ENCODE measurements at regions of chrX and their contacts with region 1.

Region 1: DNA sequence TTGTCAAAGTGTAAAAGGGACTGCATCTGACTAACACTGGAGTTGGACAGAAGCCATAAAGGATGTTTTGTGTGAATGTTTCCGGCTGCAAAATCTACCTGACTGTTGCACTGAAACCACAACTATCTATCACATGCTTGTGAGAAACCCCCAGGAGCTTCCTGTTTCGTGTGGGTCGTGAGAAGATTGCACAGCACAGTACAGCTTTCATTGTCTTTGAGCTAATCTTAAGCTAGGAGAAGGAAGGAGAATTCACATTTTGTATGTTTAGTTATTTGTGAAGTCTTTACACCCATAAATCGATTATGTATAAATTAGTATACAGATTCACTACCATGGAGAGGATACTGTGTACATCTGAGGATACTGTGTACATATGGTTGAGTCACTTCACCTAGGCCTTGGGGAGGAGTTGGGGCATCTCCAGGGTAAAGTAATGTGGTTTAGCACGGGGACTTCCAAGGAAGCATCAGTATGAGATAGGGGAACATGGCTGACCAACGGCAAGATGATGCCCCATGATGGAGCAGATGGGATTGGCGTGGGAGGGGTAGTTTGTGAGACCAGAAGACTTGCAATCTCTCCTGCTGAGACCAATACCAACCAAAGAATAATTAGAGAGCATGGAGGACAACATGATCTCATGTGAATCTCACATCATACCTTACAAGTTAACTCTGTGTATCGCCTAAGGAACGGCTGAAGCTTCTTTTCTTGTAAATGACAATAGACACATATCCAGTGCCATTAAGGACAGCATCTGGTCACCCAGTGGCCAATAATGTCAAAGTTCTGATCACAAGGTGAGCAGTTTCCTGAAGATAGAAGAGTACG is 43.1 kb upstream of the FAM9C start:
- DNase-seq: peak in 8 of 9 donors; percentile 54 to 94 (median 88)
- ATAC-seq: peak; percentile 77
- H3K4me3 ChIP-seq: peak overlapping the region; percentile 70
- H3K4me3 Mint-ChIP-seq: peak overlapping the region; percentile 72 to 89 (median 82)
- H3K27ac ChIP-seq: peak overlapping the region; percentile 88
- H3K27ac Mint-ChIP-seq: peak overlapping the region; percentile 94 to 99 (median 98)
- H3K4me1 ChIP-seq: peaks cover 79 to 81% of the 10 kb centered on the region in 2 donors
- H3K4me1 Mint-ChIP-seq: peaks cover 15 to 99% (median 86%) of the 10 kb centered on the region in 7 donors
- H3K27me3 ChIP-seq: no peaks in the 10 kb centered on the region
- H3K27me3 Mint-ChIP-seq: no peaks in the 10 kb centered on the region

Region 2: GRCh38 chrX:12505127-12505526 is 582.4 kb before region 1 on chrX:
- CTCF ChIA-PET with region 1: no interaction called
- POLR2A ChIA-PET with region 1: no interaction called
- intact Hi-C with region 1: no loop called
- DNase-seq: no peak
- ATAC-seq: no peak
- H3K4me3 ChIP-seq: no peak overlapping the region
- H3K4me3 Mint-ChIP-seq: no peak overlapping the region
- H3K27ac ChIP-seq: no peak overlapping the region
- H3K27ac Mint-ChIP-seq: no peak overlapping the region
- H3K4me1 ChIP-seq: no peaks in the 10 kb centered on the region
- H3K4me1 Mint-ChIP-seq: no peaks in the 10 kb centered on the region
- H3K27me3 ChIP-seq: no peaks in the 10 kb centered on the region
- H3K27me3 Mint-ChIP-seq: no peaks in the 10 kb centered on the region

Region 3: DNA sequence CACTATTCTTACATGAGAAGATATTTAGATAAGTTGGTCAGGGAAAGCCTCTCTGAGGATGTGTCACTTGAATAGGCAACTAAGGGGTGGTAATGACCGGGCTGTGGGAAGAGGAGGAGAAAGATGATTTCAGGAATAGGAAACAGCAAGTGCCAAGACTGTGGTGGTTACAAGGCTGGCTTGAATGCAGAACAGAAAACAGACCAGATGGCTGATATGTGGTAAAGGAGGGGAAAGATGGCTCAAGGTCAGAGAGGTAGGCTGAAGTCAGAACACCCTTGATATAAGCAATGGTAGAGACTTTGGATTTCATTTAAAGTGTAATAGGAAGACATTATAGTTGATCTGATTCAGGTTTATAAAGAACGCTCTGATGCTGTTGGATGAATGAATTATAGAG is 205.6 kb before region 1 on chrX:
- CTCF ChIA-PET with region 1: no interaction called
- POLR2A ChIA-PET with region 1: no interaction called
- intact Hi-C with region 1: no loop called
- DNase-seq: no peak
- ATAC-seq: no peak
- H3K4me3 ChIP-seq: no peak overlapping the region
- H3K4me3 Mint-ChIP-seq: no peak overlapping the region
- H3K27ac ChIP-seq: no peak overlapping the region
- H3K27ac Mint-ChIP-seq: no peak overlapping the region
- H3K4me1 ChIP-seq: no peaks in the 10 kb centered on the region
- H3K4me1 Mint-ChIP-seq: peaks cover 0 to 4% (median 0%) of the 10 kb centered on the region in 7 donors
- H3K27me3 ChIP-seq: no peaks in the 10 kb centered on the region
- H3K27me3 Mint-ChIP-seq: peaks cover 0 to 8% (median 4%) of the 10 kb centered on the region in 5 donors

Region 4: GRCh38 chrX:12946838-12947544 is 140.5 kb before region 1 on chrX:
- CTCF ChIA-PET with region 1: interaction called, 101 read pairs
- POLR2A ChIA-PET with region 1: interaction called, 449 read pairs
- intact Hi-C with region 1: loop called (anchors 1 kb)
- DNase-seq: peak in 8 of 9 donors; percentile 67 to 89 (median 74)
- ATAC-seq: peak; percentile 64
- H3K4me3 ChIP-seq: peak overlapping the region; percentile 30
- H3K4me3 Mint-ChIP-seq: peak overlapping the region; percentile 16 to 84 (median 72)
- H3K27ac ChIP-seq: peak overlapping the region; percentile 80
- H3K27ac Mint-ChIP-seq: peak overlapping the region; percentile 91 to 98 (median 96)
- H3K4me1 ChIP-seq: peaks cover 39 to 41% of the 10 kb centered on the region in 2 donors
- H3K4me1 Mint-ChIP-seq: peaks cover 8 to 60% (median 53%) of the 10 kb centered on the region in 7 donors
- H3K27me3 ChIP-seq: no peaks in the 10 kb centered on the region
- H3K27me3 Mint-ChIP-seq: no peaks in the 10 kb centered on the region

Region 5: DNA sequence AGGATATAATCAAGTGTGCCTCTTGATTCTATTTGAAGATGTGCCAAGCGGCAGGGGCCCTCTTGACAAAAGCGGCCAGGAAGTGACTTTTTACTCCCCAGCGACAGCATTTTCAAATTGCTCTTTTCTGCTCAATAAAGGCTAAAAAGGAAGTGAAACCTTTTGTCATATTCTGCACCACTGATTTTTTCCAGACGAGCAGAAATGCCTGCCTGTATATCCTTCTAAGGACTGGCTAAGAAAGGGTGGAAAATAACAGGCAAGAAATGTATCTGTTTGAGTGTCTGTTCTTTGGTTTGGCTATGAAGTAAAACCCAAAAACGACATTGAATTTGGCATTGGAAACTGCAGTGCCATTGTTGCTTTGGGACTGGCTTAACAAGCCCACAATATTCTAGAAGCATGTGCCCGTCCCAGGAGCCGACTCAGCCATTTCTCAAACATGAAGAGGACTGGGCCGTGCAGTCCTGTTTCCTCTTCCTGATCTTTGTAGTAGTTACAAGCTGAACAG is 87.2 kb before region 1 on chrX:
- CTCF ChIA-PET with region 1: interaction called, 9 read pairs
- POLR2A ChIA-PET with region 1: interaction called, 434 read pairs
- intact Hi-C with region 1: loop called (anchors 1 to 2 kb)
- DNase-seq: peak in 7 of 9 donors; percentile 46 to 74 (median 68)
- ATAC-seq: peak; percentile 65
- H3K4me3 ChIP-seq: peak overlapping the region; percentile 42
- H3K4me3 Mint-ChIP-seq: peak overlapping the region; percentile 70 to 86 (median 84)
- H3K27ac ChIP-seq: peak overlapping the region; percentile 77
- H3K27ac Mint-ChIP-seq: peak overlapping the region; percentile 83 to 98 (median 95)
- H3K4me1 ChIP-seq: peaks cover 66 to 68% of the 10 kb centered on the region in 2 donors
- H3K4me1 Mint-ChIP-seq: peaks cover 27 to 88% (median 74%) of the 10 kb centered on the region in 7 donors
- H3K27me3 ChIP-seq: no peaks in the 10 kb centered on the region
- H3K27me3 Mint-ChIP-seq: no peaks in the 10 kb centered on the region

Region 6: DNA sequence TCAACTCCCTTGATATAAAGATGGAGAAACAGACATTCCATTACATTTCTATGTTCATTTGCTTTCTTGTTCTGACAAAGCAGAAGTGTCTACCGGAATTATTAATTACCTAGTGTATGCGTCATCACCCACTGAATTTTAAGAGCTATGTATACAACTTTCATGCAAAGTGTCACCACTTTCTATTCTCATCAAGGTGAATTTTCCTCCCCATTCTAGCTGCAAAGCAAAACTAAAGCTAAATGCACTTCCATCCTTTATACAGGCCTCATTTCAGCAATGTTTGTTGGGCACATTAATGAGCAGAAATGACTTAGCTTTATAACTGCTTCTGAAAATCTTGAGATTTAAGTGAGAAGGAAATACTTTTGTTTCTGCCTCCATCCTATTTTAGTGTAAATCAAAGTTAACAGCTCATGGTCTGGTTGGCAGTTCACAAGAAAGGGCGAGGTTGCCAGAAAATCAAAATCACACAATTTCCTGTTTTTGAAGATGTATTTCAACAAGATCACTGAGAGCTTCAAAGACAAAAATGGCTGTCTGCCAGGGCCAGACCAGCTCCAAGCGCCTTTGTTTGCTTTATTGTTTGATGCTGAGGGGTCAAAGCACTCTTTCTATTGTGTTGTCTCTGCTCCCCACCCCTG is 35.9 kb before region 1 on chrX:
- CTCF ChIA-PET with region 1: interaction called, 14 read pairs
- POLR2A ChIA-PET with region 1: interaction called, 353 read pairs
- intact Hi-C with region 1: loop called (anchors 1 to 2 kb)
- DNase-seq: peak in 7 of 9 donors; percentile 69 to 87 (median 79)
- ATAC-seq: peak; percentile 84
- H3K4me3 ChIP-seq: peak overlapping the region; percentile 25
- H3K4me3 Mint-ChIP-seq: peak overlapping the region; percentile 46 to 80 (median 58)
- H3K27ac ChIP-seq: peak overlapping the region; percentile 74
- H3K27ac Mint-ChIP-seq: peak overlapping the region; percentile 93 to 96 (median 95)
- H3K4me1 ChIP-seq: peaks cover 39 to 85% of the 10 kb centered on the region in 2 donors
- H3K4me1 Mint-ChIP-seq: peaks cover 14 to 93% (median 81%) of the 10 kb centered on the region in 7 donors
- H3K27me3 ChIP-seq: no peaks in the 10 kb centered on the region
- H3K27me3 Mint-ChIP-seq: no peaks in the 10 kb centered on the region

Region 7: GRCh38 chrX:13254076-13254785 is 166.7 kb after region 1 on chrX:
- CTCF ChIA-PET with region 1: no interaction called
- POLR2A ChIA-PET with region 1: interaction called, 3 read pairs
- intact Hi-C with region 1: loop called in 1 of 2 experiments (anchors 10 kb)
- DNase-seq: no peak
- ATAC-seq: no peak
- H3K4me3 ChIP-seq: no peak overlapping the region
- H3K4me3 Mint-ChIP-seq: peak overlapping the region in 1 of 10 donors; percentile 22
- H3K27ac ChIP-seq: no peak overlapping the region
- H3K27ac Mint-ChIP-seq: peak overlapping the region in 1 of 9 donors; percentile 47
- H3K4me1 ChIP-seq: peaks cover 0 to 10% of the 10 kb centered on the region in 2 donors
- H3K4me1 Mint-ChIP-seq: peaks cover 0 to 45% (median 20%) of the 10 kb centered on the region in 7 donors
- H3K27me3 ChIP-seq: no peaks in the 10 kb centered on the region
- H3K27me3 Mint-ChIP-seq: no peaks in the 10 kb centered on the region

Region 8: GRCh38 chrX:13487731-13488523 is 400.4 kb after region 1 on chrX:
- CTCF ChIA-PET with region 1: interaction called, 24 read pairs
- POLR2A ChIA-PET with region 1: interaction called, 20 read pairs
- intact Hi-C with region 1: loop called (anchors 1 kb)
- DNase-seq: peak in 8 of 9 donors; percentile 22 to 73 (median 52)
- ATAC-seq: peak; percentile 79
- H3K4me3 ChIP-seq: no peak overlapping the region
- H3K4me3 Mint-ChIP-seq: peak overlapping the region in 2 of 10 donors; percentile 11 to 48
- H3K27ac ChIP-seq: no peak overlapping the region
- H3K27ac Mint-ChIP-seq: peak overlapping the region in 8 of 9 donors; percentile 23 to 87 (median 64)
- H3K4me1 ChIP-seq: peaks cover 11 to 27% of the 10 kb centered on the region in 2 donors
- H3K4me1 Mint-ChIP-seq: peaks cover 4 to 39% (median 27%) of the 10 kb centered on the region in 7 donors
- H3K27me3 ChIP-seq: no peaks in the 10 kb centered on the region
- H3K27me3 Mint-ChIP-seq: no peaks in the 10 kb centered on the region